Panc1 (cell line): ENCODE measurements at regions of chr1 and their contacts with region 1.

Region 1: GRCh38 chr1:27519331-27520258 is 29.6 kb upstream of the WASF2 start:
- DNase-seq: no peak
- ATAC-seq: peak; percentile 59
- H3K4me3 ChIP-seq: no peak overlapping the region
- H3K27ac ChIP-seq: no peak overlapping the region
- H3K4me1 ChIP-seq: peaks cover 10% of the 10 kb centered on the region; the same call in 1 of the 2 replicates
- H3K27me3 ChIP-seq: no peaks in the 10 kb centered on the region
- CTCF ChIP-seq: no peak

Region 2: GRCh38 chr1:27455139-27455811 is 64.3 kb before region 1 on chr1:
- CTCF ChIA-PET with region 1: no interaction called
- POLR2A ChIA-PET with region 1: no interaction called
- in situ Hi-C with region 1: no loop called
- intact Hi-C with region 1: no loop called
- DNase-seq: no peak
- ATAC-seq: no peak
- H3K4me3 ChIP-seq: no peak overlapping the region
- H3K27ac ChIP-seq: no peak overlapping the region
- H3K4me1 ChIP-seq: no peaks in the 10 kb centered on the region
- H3K27me3 ChIP-seq: no peaks in the 10 kb centered on the region
- CTCF ChIP-seq: no peak

Region 3: GRCh38 chr1:27556781-27557595 is 37.4 kb after region 1 on chr1:
- CTCF ChIA-PET with region 1: interaction called, 10 read pairs
- POLR2A ChIA-PET with region 1: no interaction called
- in situ Hi-C with region 1: no loop called
- intact Hi-C with region 1: no loop called
- DNase-seq: no peak
- ATAC-seq: peak; percentile 77
- H3K4me3 ChIP-seq: no peak overlapping the region
- H3K27ac ChIP-seq: peak overlapping the region; percentile 78; the same call in 1 of the 2 replicates
- H3K4me1 ChIP-seq: peaks cover 52% of the 10 kb centered on the region
- H3K27me3 ChIP-seq: no peaks in the 10 kb centered on the region
- CTCF ChIP-seq: peak; percentile 93

Region 4: GRCh38 chr1:28235755-28236655 is 716.4 kb after region 1 on chr1 and contains the start of gene ATP5IF1:
- CTCF ChIA-PET with region 1: no interaction called
- POLR2A ChIA-PET with region 1: interaction called, 11 read pairs
- in situ Hi-C with region 1: no loop called
- intact Hi-C with region 1: no loop called
- DNase-seq: peak; percentile 96
- ATAC-seq: peak; percentile 95
- H3K4me3 ChIP-seq: peak within 1 kb of the TSS; percentile 92 to 94
- H3K27ac ChIP-seq: peak within 1 kb of the TSS; percentile 91
- H3K4me1 ChIP-seq: peaks cover 8% of the 10 kb centered on the region
- H3K27me3 ChIP-seq: no peaks in the 10 kb centered on the region
- CTCF ChIP-seq: no peak
- total RNA-seq, gene ATP5IF1: 94.5 TPM